Activated naive CD8-positive, alpha-beta T cell treated with anti-CD3 and anti-CD28 coated beads, Interleukin-2, amount 10 ng/mL, durations not matched to agents 7 days and 5 days (primary cell): ENCODE measurements at regions of chr14 and their contacts with region 1.

Region 1: DNA sequence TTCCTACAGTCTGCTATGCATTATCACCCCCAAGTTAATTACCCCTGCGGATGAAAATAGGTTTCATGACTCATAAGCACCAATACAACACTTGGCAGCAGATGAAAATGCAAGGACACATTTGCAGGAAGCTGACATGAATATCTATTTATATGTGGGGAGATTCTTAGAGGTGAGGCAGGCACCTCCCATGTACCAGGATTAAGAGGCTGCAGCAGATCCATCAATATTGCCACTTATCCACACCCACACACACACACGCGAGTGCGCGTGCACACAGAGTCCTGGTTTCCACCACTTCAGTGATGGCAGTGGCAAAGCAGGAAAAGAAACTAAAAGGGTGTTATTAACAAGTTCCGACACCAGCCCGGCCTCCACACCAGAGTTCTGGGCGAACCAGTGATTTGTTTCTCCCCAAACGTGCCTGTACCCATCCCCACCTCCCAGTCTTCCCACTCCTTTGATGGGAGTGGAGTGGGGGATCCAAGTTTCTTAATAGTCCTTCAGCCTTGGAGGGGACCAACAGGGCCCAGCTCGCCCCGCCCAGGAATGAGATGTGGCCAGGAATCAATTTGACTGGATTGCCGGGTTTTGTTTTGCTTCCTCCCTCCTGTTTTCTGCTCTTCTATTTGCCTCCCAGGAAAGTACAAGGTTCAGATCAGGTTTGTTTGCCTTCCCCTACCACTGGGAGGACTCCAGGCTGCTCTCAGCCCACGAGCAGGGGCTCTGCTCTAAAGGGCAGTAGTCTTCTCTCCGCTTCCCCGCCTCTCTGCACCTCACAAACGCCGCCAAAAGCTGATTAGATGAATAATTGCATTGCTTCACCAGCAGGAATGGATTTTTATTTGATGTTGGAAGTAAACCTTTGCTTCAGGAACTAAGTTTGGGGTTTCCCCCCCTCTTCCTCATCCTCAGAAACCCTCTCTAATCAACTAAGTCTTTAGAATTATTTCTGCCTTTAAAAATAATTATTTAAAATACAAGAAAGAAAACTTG is 5.2 kb downstream of the IRF2BPL start:
- DNase-seq: no peak
- ATAC-seq: no peak
- H3K4me3 Mint-ChIP-seq: peak overlapping the region; percentile 74
- H3K27ac Mint-ChIP-seq: peak overlapping the region; percentile 86
- H3K4me1 Mint-ChIP-seq: peaks cover 39% of the 10 kb centered on the region
- H3K27me3 Mint-ChIP-seq: no peaks in the 10 kb centered on the region

Region 2: DNA sequence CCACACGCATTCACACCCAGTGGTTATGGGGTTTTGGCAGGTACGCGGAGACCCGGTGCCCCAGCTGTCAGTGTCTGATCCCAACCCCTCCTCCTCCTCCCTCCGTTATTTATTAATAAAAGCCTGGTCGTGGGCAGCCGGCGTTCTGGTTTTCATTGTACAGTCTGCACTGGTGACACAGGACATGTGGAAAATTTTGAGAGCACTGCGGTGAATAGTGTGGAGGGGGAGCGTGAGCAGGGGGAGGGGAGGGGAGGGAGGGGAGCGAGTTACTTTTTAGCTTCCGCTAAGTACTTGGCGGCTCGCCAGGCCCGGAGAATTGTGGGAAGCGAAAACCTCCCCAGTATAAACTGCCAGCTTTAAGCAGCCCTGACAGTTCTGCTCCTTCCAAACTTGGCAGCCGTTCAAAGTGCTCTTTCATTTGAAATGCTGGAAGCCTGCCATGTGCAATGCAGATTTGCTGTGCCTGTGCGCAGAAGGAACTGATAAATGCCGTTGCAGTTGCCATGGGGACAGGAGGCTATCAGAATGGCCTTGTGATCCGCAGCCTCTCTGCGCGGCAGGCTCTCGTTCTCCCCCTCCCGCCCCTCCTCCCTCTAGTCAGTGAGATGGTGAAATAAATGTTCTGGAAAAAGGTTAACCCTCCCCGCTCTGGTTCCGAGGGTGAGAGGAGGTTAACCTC is 16.9 kb after region 1 on chr14:
- POLR2A ChIA-PET with region 1: interaction called, 140 read pairs
- DNase-seq: peak; percentile 93
- ATAC-seq: peak; percentile 70
- H3K4me3 Mint-ChIP-seq: peak overlapping the region; percentile 87
- H3K27ac Mint-ChIP-seq: peak overlapping the region; percentile 99
- H3K4me1 Mint-ChIP-seq: peaks cover 72% of the 10 kb centered on the region
- H3K27me3 Mint-ChIP-seq: no peaks in the 10 kb centered on the region

Region 3: DNA sequence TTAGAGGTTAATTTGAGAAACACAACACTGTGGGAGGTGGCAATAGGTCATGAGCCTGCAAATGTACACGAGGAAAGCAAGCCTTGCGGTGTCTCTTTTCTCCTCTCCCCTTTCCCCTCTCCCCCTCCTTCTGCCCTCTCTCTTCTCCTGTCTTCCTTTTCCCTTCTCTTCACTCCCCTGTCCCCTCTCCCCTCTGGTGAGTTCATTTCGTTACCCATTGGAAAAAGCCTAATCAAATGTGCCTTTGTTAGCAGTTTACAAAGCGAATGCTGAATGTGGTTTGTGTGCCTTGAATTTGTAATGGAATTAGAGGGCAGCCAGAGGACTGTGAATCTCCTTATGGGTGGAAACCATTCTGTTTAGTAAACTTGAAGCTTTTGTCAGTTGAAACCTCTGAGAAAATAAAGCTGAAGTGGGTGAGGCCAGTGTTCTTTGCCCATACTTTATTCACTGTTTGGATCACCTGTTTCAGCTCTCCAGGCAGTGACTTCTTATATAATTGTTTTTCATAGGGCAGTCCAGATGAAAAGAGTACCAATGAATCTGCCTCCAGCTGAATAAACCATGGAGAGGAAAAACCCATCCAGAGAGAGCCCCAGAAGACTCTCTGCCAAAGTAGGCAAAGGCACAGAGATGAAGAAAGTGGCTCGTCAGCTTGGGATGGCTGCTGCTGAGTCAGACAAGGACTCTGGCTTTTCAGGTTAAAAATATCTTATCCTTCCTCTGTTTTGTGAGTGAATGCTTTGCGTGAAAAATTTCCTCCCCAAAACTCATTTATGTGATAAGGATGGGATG is 82.0 kb after region 1 on chr14:
- POLR2A ChIA-PET with region 1: no interaction called
- DNase-seq: no peak
- ATAC-seq: no peak
- H3K4me3 Mint-ChIP-seq: no peak overlapping the region
- H3K27ac Mint-ChIP-seq: no peak overlapping the region
- H3K4me1 Mint-ChIP-seq: peaks cover 9% of the 10 kb centered on the region
- H3K27me3 Mint-ChIP-seq: no peaks in the 10 kb centered on the region

Region 4: GRCh38 chr14:77139540-77140358 is 116.5 kb after region 1 on chr14:
- POLR2A ChIA-PET with region 1: no interaction called
- DNase-seq: peak; percentile 69
- ATAC-seq: peak; percentile 83
- H3K4me3 Mint-ChIP-seq: peak overlapping the region; percentile 53
- H3K27ac Mint-ChIP-seq: no peak overlapping the region
- H3K4me1 Mint-ChIP-seq: peaks cover 13% of the 10 kb centered on the region
- H3K27me3 Mint-ChIP-seq: peaks cover 79% of the 10 kb centered on the region